Posterior cingulate gyrus (tissue), 11 donors: ENCODE measurements at regions of chr10 and their contacts with region 1.

Region 1: GRCh38 chr10:92848441-92849233 is at the start of gene EXOC6:
- DNase-seq: peak; percentile 50 to 96 (median 78)

Region 2: GRCh38 chr10:92592761-92593618 is 255.6 kb before region 1 on chr10 and contains the start of gene KIF11:
- intact Hi-C with region 1: loop called (anchors 10 kb)
- DNase-seq: peak; percentile 95 to 100 (median 98)

Region 3: GRCh38 chr10:92880233-92880861 is 31.7 kb after region 1 on chr10:
- intact Hi-C with region 1: loop called (anchors 1 kb)
- DNase-seq: no peak